ENCODE measurements at regions of chr2 and their contacts with region 1.

Region 1: GRCh38 chr2:241803387-241804325 is 5.3 kb upstream of the NEU4 start:
- DNase-seq: peak in 5 of 9 experiments; percentile 46 to 78 (median 66)
- ATAC-seq: peak; percentile 74
- H3K4me3 ChIP-seq: peak overlapping the region; percentile 58 to 67
- H3K4me3 Mint-ChIP-seq: peak overlapping the region; percentile 68
- H3K27ac ChIP-seq: peak overlapping the region in 1 of 2 experiments; percentile 27
- H3K27ac Mint-ChIP-seq: no peak overlapping the region
- H3K4me1 ChIP-seq: peaks cover 19% of the 10 kb centered on the region
- H3K4me1 Mint-ChIP-seq: peaks cover 9% of the 10 kb centered on the region
- H3K27me3 ChIP-seq: peaks cover 5 to 6% of the 10 kb centered on the region in 2 experiments
- H3K27me3 Mint-ChIP-seq: peaks cover 4% of the 10 kb centered on the region
- CTCF ChIP-seq: no peak

Region 2: DNA sequence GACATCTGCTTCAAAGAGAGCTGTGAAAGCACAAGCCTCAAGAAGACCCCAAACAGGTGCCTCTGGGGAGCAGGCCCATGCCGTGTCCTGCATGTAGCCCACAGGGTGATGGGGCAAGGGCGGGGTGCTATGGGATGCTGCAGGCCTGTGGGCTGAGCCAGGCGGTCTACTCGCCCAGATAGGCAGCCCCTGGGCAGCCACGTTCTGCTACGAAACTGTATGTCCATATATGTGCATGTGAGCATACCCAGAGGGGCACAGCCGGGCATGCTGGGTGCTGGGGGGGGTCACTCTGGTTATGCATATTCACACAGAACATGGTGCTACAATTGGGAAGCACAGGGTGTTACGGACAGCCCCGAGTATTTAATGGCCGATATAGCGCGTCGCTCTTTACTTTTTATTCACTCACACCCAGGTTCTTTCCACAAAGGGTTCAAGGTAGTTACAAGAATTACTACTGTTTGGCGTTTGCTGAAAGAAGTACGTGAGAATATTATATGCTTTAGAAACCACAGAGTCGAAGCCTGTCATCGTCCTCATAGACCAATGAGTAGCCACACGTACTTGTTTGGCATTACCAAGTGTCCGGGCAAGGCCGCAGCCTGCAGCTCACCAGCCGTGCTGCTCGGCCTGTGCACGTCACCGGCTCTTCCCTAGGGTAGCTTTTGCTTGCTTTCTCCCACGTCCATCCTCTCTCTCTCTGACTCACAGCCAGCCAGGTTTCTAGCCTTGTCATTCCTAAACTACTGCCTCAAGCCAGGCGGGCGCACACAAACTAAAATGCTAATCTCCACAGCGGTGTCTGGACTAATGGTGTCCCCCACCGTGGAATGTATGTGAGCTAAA is 716.0 kb before region 1 on chr2:
- CTCF ChIA-PET with region 1: no interaction called
- POLR2A ChIA-PET with region 1: no interaction called
- intact Hi-C with region 1: no loop called
- DNase-seq: no peak
- ATAC-seq: no peak
- H3K4me3 ChIP-seq: no peak overlapping the region
- H3K4me3 Mint-ChIP-seq: no peak overlapping the region
- H3K27ac ChIP-seq: no peak overlapping the region
- H3K27ac Mint-ChIP-seq: peak overlapping the region; percentile 83
- H3K4me1 ChIP-seq: peaks cover 14% of the 10 kb centered on the region
- H3K4me1 Mint-ChIP-seq: peaks cover 40% of the 10 kb centered on the region
- H3K27me3 ChIP-seq: no peaks in the 10 kb centered on the region
- H3K27me3 Mint-ChIP-seq: no peaks in the 10 kb centered on the region
- CTCF ChIP-seq: no peak

Region 3: DNA sequence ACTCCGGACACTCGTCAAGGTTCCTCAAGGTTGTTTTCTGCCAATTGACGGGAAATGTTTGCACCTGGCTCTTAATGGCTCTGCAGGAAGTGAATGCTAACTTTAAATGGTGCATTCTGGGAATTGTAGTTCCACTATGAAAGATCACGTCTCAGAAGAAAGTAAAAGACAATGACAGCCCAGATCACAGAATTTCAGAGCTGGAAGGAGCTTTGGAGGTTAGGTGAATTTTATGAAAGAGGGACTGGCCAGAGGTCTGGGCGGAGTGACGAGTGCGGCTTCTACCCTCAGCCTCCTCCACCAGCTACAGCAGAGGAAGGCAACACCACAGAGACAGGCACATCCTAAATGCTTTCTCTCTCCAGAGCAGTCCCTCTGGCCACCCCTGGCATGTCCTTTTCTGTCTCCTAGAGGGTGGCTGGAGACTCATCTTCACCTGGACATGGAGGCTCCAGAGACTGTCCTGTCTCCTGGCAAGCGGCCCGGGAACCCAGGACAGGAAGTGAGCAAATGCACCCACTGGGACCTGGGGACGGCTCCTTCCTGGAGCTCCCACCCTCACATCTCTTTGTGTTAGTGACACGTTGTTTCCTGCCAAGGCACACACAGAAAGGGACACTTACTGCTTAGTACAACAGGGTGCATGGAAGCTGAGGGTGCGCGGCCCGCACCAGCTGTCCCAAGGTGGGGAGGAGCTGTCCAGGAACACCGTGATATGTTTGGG is 186.1 kb before region 1 on chr2:
- CTCF ChIA-PET with region 1: no interaction called
- POLR2A ChIA-PET with region 1: no interaction called
- intact Hi-C with region 1: loop called in 1 of 2 experiments (anchors 1 kb)
- DNase-seq: peak in 6 of 9 experiments; percentile 11 to 80 (median 46)
- ATAC-seq: peak; percentile 86
- H3K4me3 ChIP-seq: peak overlapping the region; percentile 55 to 73
- H3K4me3 Mint-ChIP-seq: peak overlapping the region; percentile 89
- H3K27ac ChIP-seq: peak overlapping the region; percentile 61 to 70
- H3K27ac Mint-ChIP-seq: peak overlapping the region; percentile 88
- H3K4me1 ChIP-seq: peaks cover 15% of the 10 kb centered on the region
- H3K4me1 Mint-ChIP-seq: peaks cover 31% of the 10 kb centered on the region
- H3K27me3 ChIP-seq: no peaks in the 10 kb centered on the region
- H3K27me3 Mint-ChIP-seq: no peaks in the 10 kb centered on the region
- CTCF ChIP-seq: no peak

Region 4: DNA sequence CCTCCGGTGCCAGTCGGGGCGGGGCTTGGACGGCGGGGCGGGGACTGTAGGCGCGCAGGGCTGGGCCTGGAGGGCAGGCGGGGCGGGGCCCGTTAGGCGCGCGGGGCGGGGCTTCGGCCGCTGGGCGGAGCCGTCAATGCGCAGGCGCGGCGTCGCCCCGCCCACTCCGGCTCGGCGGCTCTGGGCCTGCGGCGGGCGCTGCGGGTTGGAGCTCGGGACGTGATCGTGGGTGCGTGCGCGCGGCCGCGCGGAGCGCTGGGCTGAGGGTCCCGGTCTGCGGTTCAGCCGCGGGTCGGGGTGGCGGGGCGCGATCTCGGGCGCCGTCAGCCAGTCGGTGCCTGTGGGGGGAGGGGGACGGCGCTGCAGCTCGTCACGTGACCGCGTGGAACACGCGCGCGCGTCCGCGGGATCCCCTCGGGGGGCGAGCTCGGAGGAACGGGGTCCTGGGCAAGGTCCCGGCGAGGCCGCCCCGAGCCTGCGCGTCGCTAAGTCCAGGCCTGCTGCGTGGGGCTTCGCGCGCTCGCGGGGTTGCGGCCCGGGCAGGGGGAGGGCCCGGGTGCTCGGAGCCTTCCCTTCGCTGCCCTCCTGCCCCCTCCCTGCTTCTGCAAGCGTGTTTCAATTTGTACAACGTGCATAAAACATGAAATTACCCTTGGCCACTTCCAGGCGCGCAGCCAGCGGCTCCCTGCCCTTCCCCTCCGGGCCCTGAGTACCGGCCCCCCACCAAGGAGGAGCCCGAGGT is 69.0 kb before region 1 on chr2 and contains the start of gene D2HGDH:
- CTCF ChIA-PET with region 1: no interaction called
- POLR2A ChIA-PET with region 1: interaction called, 4 read pairs
- intact Hi-C with region 1: loop called in 1 of 2 experiments (anchors 1 kb)
- DNase-seq: peak; percentile 84 to 97 (median 94)
- ATAC-seq: peak; percentile 92
- H3K4me3 ChIP-seq: peak within 1 kb of the TSS; percentile 68 to 70
- H3K4me3 Mint-ChIP-seq: peak within 1 kb of the TSS; percentile 86
- H3K27ac ChIP-seq: peak within 1 kb of the TSS; percentile 26 to 65
- H3K27ac Mint-ChIP-seq: peak within 1 kb of the TSS; percentile 85
- H3K4me1 ChIP-seq: peaks cover 22% of the 10 kb centered on the region
- H3K4me1 Mint-ChIP-seq: peaks cover 25% of the 10 kb centered on the region
- H3K27me3 ChIP-seq: no peaks in the 10 kb centered on the region
- H3K27me3 Mint-ChIP-seq: no peaks in the 10 kb centered on the region
- CTCF ChIP-seq: no peak
- total RNA-seq, gene D2HGDH: 41.6 to 46.4 TPM

Region 5: DNA sequence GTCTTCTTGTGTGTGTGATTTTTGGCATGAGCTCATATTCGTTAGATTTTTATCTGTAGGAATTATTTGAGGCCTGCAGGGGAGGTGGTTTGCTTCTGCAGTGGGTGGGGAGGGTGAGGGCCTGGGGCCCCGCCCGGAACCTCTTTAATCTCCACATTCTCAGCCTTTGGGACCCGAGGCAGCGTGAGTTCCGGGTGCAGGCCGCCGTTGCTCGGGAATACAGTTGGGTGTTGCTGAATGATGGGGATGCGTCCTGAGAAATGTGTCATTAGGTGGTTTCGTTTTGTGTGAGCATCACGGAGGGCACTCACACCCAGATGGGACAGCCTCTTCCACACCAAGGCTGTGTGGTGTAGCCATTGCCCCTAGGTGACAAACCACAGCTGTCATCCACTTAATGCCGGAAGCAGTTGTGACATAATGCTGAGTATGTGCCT is 40.7 kb before region 1 on chr2:
- CTCF ChIA-PET with region 1: no interaction called
- POLR2A ChIA-PET with region 1: interaction called, 12 read pairs
- intact Hi-C with region 1: no loop called
- DNase-seq: peak; percentile 44 to 95 (median 71)
- ATAC-seq: peak; percentile 77
- H3K4me3 ChIP-seq: peak overlapping the region in 1 of 2 experiments; percentile 33
- H3K4me3 Mint-ChIP-seq: peak overlapping the region; percentile 68
- H3K27ac ChIP-seq: peak overlapping the region; percentile 66 to 75
- H3K27ac Mint-ChIP-seq: peak overlapping the region; percentile 96
- H3K4me1 ChIP-seq: peaks cover 15% of the 10 kb centered on the region
- H3K4me1 Mint-ChIP-seq: peaks cover 27% of the 10 kb centered on the region
- H3K27me3 ChIP-seq: no peaks in the 10 kb centered on the region
- H3K27me3 Mint-ChIP-seq: no peaks in the 10 kb centered on the region
- CTCF ChIP-seq: no peak

Region 6: DNA sequence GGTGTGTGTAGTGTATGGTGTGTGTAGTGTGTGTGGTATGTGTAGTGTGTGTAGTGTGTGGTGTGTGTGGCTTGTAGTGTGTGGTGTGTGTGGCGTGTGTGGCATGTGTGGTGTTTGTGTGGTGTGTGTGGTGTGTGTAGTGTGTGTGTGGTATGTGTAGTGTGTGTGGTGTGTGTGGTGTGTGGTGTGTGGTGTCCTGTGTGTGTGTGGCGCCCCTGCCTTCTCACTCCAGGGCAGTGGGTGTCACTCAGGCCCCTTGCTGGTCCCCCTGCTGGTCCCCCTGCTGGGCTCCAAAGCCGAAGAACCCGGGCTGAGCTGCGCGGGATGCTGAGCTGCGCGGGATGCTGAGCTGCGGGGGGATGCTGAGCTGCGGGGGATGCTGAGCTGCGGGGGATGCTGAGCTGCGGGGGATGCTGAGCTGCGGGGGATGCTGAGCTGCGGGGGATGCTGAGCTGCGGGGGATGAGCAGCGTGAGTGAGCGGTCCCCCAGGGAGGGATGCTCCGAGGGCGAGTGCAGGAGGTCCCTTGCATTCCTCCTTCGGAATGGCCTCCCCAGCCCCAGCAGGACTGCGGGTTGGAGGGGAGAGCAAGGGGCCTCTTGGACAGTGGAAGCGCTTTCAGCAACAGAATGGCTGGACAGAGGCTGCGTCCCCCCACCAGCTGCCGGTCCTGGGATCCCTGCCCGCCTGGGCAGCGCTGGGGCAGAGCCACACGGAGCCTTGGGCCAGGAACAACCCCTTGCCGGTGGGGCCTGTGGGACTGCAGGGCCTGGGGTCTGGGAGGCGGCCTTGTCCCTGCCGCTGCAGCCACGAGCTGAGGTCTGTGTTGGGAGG is 62.5 kb after region 1 on chr2:
- CTCF ChIA-PET with region 1: interaction called, 3 read pairs
- POLR2A ChIA-PET with region 1: interaction called, 4 read pairs
- intact Hi-C with region 1: loop called in 1 of 2 experiments (anchors 5 kb)
- DNase-seq: peak in 3 of 9 experiments; percentile 24 to 50 (median 46)
- ATAC-seq: no peak
- H3K4me3 ChIP-seq: no peak overlapping the region
- H3K4me3 Mint-ChIP-seq: no peak overlapping the region
- H3K27ac ChIP-seq: peak overlapping the region in 1 of 2 experiments; percentile 62
- H3K27ac Mint-ChIP-seq: peak overlapping the region; percentile 46
- H3K4me1 ChIP-seq: peaks cover 81% of the 10 kb centered on the region
- H3K4me1 Mint-ChIP-seq: peaks cover 72% of the 10 kb centered on the region
- H3K27me3 ChIP-seq: peaks cover 0 to 30% of the 10 kb centered on the region in 2 experiments
- H3K27me3 Mint-ChIP-seq: peaks cover 28% of the 10 kb centered on the region
- CTCF ChIP-seq: no peak

Region 7: DNA sequence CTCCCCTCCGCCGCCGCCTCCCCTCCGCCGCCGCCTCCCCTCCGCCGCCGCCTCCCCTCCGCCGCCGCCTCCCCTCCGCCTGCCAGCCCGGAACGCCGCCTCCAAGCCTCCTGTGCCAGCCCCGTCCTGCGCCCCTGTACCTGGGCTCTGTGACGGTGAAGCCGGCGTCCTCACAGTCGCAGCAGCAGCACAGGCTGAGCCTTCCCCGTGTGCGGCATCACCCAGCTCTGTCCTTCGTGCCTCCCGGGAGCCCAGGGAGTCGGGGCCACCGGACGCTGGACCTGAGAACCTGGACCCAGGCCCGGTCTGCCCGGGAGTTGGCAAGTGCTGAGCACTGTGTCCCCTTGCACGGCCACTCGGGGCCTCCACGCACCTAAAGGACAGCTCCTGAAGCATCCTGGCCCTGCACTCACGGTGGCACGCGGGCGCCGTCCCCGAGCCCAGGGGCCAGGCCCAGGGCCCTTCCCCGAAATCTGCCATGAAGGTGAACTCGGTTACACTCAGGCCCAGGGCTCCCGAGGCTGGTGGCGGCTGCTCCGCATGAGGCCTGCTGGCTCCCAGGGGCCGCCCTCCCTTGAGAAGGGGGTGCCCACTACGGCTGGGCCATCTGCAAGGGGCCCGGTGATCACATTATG is 98.8 kb after region 1 on chr2:
- CTCF ChIA-PET with region 1: no interaction called
- POLR2A ChIA-PET with region 1: no interaction called
- intact Hi-C with region 1: no loop called
- DNase-seq: no peak
- ATAC-seq: no peak
- H3K4me3 ChIP-seq: no peak overlapping the region
- H3K4me3 Mint-ChIP-seq: no peak overlapping the region
- H3K27ac ChIP-seq: no peak overlapping the region
- H3K27ac Mint-ChIP-seq: no peak overlapping the region
- H3K4me1 ChIP-seq: no peaks in the 10 kb centered on the region
- H3K4me1 Mint-ChIP-seq: no peaks in the 10 kb centered on the region
- H3K27me3 ChIP-seq: no peaks in the 10 kb centered on the region
- H3K27me3 Mint-ChIP-seq: no peaks in the 10 kb centered on the region
- CTCF ChIP-seq: no peak

Measured in CD8-positive, alpha-beta T cell (primary cell).